ENCODE measurements at regions of chr10 and their contacts with region 1.

Region 1: DNA sequence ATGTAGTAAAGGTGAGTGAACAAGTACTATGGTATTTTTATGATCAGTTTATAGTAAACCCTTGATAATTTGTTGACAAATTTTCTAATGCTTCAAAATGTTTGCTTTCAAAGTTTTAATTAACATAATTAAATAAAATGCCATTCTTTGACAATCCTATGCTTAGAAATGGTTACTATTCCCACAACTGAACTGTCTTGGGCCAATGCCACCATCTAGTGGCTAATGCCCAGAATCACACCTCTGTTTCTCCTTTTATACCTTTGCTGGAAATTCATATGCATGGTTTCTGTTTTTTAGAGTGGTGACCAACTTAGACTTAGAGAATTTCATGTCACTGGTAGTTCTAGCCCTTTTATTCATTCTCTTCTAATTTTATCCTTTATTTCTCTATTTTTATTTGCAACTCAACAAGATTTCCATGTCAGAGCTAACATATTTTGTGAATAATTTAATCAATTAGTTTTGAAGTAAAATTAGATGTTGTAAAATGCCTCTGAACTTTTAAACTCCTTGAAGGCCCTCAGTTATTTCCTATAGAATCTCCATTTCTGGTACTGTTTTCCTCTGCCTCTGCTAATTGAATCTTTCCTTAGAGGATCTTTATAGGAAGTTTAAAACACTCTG is 31.1 kb downstream of the PCGF5 start:
- DNase-seq: peak in 8 of 10 donors; percentile 38 to 74 (median 52)
- H3K4me3 ChIP-seq: no peak overlapping the region
- H3K27ac ChIP-seq: peak overlapping the region in 25 of 59 donors; percentile 1 to 64 (median 41)
- H3K27me3 ChIP-seq: no peaks in the 10 kb centered on the region
- CTCF ChIP-seq: peak; percentile 86 to 99 (median 95)

Region 2: DNA sequence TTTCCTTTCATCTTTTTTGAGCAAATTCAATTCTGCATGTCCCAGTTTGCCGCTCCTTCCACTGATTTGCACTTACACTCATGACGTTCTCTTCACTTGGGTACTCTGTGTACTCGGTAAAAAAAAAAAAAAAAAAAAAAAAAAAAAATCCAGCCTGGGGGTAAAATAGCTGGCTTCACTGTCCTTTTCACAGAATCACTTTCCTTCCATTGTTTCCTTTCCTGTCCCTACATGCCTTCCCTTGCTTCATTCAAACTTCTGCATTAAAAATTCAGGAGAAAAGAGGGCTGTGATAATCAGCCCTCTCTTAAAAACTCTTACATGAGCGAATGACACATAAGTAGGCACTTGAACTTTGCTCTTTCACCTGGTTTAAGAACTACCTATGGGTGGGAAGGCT is 339.4 kb before region 1 on chr10:
- intact Hi-C with region 1: loop called (anchors 2 to 5 kb)
- DNase-seq: no peak
- H3K4me3 ChIP-seq: peak overlapping the region in 1 of 59 donors; percentile 40
- H3K27ac ChIP-seq: no peak overlapping the region
- H3K27me3 ChIP-seq: no peaks in the 10 kb centered on the region
- CTCF ChIP-seq: no peak

Region 3: DNA sequence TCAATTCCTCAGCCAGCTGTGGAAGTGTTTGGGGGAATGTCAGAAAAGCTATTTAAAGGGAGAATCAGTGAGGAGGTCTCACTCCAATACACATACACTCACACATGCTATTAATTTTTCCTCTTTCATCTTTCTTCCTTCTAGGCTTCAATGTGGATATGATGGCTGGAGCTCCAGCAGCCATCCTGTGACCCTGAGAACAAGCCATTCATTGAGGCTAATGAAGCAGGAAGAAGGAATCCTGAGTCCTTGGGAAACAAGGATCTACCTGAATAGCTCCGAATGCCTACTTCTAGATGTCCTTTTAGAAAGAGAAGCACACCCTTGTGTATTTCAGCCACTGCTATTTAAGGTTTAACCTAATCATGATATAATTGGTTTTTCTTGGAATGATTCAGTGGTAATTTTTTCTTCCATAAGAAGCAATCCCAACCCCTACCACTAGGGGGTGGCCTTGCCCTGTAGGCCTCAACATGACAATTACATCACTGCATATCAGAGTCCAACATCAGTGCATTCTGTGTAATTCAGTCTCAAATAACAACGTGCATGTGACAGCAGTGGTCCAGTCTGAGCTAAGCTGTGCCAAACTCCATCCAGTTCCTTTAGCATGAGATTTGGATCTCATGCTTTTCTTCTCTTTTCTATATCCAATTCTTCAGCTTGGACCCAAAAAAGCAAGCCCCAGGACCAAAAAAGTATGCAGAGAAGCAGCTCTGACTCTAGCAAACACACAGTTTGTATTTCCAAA is 245.4 kb before region 1 on chr10:
- intact Hi-C with region 1: loop called (anchors 1 to 2 kb)
- DNase-seq: peak in 8 of 10 donors; percentile 16 to 78 (median 51)
- H3K4me3 ChIP-seq: peak overlapping the region in 11 of 59 donors; percentile 0 to 29 (median 10)
- H3K27ac ChIP-seq: peak overlapping the region; percentile 29 to 98 (median 91)
- H3K27me3 ChIP-seq: no peaks in the 10 kb centered on the region
- CTCF ChIP-seq: peak; percentile 85 to 100 (median 96)

Region 4: DNA sequence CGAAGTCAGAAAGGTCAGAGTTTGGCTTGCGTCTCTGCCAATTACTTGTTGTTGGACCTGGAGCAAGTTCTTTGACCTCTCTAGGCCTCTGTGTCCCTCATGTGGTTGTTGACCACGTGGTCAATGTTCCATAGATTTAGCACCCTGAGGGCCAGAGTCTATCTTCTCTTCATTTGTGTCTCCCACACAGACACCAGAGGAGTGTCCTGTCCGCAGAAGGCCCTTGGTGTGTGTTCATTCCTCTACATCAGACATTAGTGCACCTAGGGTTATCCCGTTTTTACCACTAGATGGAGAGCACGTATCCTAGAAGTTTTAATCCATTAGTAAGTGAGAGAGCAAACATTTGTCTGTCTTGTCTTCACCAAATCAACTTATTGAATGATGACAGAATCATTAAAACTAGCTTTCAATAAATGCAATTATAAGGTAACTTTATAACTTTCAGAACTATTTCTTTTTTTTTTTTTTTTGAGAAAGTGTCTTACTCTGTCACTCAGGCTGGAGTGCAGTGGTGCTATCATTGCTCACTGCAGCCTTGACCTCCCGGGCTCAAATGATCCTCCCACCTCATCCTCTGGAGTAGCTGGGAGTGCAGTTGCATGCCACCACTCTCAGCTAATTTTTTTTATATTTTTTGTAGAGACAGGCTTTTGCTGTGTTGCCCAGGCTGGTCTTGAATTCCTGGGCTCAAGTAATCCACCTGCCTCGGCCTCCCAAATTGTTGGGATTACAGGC is 208.2 kb before region 1 on chr10:
- intact Hi-C with region 1: loop called in 1 of 2 experiments (anchors 5 kb)
- DNase-seq: no peak
- H3K4me3 ChIP-seq: no peak overlapping the region
- H3K27ac ChIP-seq: no peak overlapping the region
- H3K27me3 ChIP-seq: no peaks in the 10 kb centered on the region
- CTCF ChIP-seq: peak; percentile 27 to 72 (median 52)

Region 5: DNA sequence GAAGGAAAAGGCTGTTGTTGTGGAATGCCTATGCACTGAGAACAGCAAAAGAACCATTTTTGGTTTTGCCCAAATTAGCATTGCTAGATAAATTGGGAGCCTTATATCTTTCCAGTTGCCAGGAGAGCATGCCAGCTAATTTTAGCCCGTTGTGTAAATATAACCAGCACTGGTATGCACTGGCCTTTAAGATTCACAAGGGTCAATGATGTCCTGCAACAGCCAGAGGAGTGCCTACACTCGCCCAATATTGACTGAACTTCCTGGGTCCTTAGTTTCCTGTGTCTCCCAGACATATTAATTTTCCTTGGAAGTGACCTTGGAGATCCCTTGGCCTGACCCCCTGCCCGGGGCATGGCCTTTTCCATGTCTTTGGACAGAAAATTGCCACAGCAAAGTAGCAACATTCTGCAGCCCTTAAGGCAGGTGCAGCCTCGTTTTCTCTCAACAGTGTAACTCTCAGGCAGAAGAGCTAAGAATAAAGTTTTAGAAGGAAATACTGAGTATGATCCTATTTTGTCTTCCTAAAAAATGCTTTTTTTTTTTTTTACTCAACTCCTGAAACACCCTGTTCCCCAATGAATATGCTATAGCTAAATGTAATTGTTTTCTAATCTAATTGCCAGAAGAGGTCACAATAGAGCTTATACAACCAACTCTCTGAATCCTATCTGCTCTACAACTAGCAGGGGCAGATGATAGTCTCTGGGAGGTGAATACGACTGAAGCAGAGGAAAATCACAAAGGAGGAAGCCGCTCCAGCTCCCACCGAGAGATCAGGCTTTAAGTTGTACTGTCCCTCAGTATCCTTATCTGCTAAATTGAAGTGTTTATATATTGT is 163.0 kb before region 1 on chr10:
- intact Hi-C with region 1: loop called in 1 of 2 experiments (anchors 5 kb)
- DNase-seq: no peak
- H3K4me3 ChIP-seq: no peak overlapping the region
- H3K27ac ChIP-seq: peak overlapping the region in 9 of 59 donors; percentile 8 to 53 (median 32)
- H3K27me3 ChIP-seq: no peaks in the 10 kb centered on the region
- CTCF ChIP-seq: peak in 48 of 56 donors; percentile 13 to 69 (median 43)

Measured in dorsolateral prefrontal cortex (tissue), 120 donors.